Activated T-helper 2 cell treated with anti-CD3 and anti-CD28 coated beads, Interferon-gamma antibody, Interleukin-2, Interleukin-4, amounts not matched to agents 10 μg/mL and 5 μg/mL and 100 μg/mL, durations not matched to agents 14 hours and 24 hours and 36 hours (primary cell): ENCODE measurements at regions of chr1 and their contacts with region 1.

Region 1: DNA sequence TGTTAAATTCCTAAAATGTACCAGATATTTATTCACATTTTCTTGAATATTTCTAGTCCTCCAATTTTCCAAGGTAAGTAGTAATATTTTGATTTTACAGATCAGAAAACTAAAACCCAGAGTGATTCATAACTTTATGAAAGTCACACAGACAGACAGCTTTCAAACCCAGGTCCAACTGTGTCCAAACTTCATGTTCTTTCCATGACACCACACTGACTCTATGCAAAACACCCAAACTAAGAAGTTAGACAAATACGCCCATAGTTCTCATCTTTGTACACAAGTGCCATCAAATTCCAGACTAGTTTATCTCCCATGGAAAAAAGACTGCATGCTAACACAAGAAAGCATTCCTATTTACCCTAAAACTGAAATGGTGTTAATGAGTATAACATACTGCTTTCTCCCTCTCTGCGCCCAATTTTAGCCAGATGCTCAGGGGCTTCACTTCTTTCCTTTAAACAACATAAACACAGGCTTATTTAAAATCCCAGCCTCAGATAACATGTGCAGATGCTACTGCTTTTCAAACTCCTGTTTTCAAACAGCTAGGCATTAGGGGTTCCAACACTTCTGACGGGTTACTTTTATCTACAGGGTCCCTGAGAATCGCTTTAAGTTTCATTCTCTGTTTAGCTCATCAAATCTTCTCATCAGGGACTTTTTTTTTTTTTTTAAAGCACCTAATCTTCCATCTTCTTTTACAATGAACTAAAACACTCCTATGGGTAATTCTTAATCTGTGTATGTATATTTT is 44.6 kb downstream of the WASF2 start:
- DNase-seq: no peak
- H3K4me3 Mint-ChIP-seq: peak overlapping the region; percentile 67
- H3K27ac Mint-ChIP-seq: peak overlapping the region; percentile 96
- H3K4me1 Mint-ChIP-seq: peaks cover 52% of the 10 kb centered on the region
- H3K27me3 Mint-ChIP-seq: no peaks in the 10 kb centered on the region

Region 2: DNA sequence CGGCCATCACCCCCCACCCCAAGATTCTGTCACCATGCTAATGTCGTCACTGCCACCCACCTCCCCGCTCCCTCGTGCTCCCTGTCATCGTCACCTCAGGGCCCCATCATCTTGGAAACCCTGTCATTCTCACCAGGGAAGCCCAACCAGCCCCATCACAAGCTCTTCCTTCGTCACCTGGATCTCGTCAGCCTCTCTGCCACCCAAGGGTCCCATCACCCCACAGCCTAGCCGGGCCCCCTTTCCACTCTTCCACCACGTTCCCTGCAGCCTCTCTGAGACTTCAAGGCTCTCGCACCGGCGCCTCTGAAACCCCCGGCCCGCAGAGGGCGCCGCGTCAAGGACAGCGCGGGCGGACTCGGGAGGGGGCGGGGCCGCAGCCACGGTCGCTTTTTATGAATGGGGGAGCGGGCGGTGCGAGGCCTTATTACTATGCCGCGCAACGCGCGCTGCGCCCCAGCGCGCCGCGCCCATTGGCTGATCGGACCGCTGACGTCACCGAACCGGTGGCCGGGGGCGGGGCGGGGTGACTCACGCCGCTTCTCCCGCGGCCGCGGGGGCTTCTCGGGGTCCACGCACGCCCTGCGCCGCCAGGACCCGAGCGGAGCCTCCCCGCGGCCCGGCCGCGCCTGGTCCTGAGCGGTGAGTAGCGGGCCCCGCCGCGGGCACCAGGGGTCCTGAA is 53.1 kb before region 1 on chr1 and contains the start of gene GPR3:
- intact Hi-C with region 1: no loop called
- DNase-seq: peak; percentile 90
- H3K4me3 Mint-ChIP-seq: peak within 1 kb of the TSS; percentile 82
- H3K27ac Mint-ChIP-seq: peak within 1 kb of the TSS; percentile 89
- H3K4me1 Mint-ChIP-seq: peaks cover 14% of the 10 kb centered on the region
- H3K27me3 Mint-ChIP-seq: peaks cover 6% of the 10 kb centered on the region
- total RNA-seq, gene GPR3: 3.7 and 3.9 TPM in 2 replicates

Region 3: GRCh38 chr1:27489910-27490741 is 44.8 kb after region 1 on chr1 and contains the start of gene WASF2:
- intact Hi-C with region 1: loop called (anchors 2 kb)
- DNase-seq: peak; percentile 96
- H3K4me3 Mint-ChIP-seq: peak within 1 kb of the TSS; percentile 97
- H3K27ac Mint-ChIP-seq: peak within 1 kb of the TSS; percentile 99
- H3K4me1 Mint-ChIP-seq: peaks cover 24% of the 10 kb centered on the region
- H3K27me3 Mint-ChIP-seq: no peaks in the 10 kb centered on the region
- total RNA-seq, gene WASF2: 125 and 128 TPM in 2 replicates